ENCODE measurements at regions of chr19 and their contacts with region 1.

Region 1: DNA sequence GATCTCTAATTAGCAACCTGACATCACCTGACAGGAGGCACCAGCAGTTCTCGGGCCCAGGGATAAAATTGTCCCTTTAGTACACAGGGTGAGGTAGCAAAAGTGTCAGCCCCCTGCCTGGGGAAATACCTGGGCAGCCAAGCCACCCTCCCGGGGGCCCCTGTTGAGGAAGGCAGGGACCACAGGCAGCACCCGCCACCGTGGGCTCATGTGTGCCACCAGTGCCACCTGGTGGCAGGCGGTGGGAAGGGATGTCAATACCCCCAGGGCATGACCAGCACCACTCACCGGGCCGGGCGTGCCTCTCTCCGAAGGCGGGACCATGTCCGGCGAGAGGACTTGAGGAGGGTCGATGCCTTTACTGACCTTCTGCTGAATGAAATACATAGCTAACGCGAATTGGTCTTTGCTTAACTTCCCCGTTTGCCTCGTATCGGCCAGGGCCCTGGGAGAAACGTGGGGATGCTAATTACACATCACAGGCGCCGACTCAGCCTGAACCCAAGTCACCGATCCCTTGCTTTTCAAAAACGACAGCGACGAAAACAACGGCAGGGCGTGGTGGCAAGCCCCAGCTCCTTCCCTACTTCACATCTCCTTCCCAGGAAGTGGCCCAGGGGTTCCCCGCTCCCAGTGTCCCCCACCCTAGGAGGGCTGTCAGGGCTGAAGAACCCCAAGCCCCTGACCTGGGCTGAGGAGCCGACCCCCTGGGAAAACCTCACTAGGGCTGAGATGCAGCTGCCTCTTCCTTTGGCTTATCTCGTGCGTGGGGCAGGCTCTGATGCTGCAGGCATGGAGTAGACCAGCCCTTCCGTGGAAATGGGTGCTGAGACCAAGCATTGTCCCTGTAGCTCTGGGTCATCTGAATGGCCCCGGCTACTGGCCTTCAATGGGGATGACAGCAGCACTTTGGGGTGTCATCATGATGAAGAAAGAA is 53.8 kb downstream of the EPS15L1 start:
- DNase-seq: peak; percentile 48 to 69
- ATAC-seq: peak; percentile 87 to 94
- H3K4me3 ChIP-seq: no peak overlapping the region
- H3K27ac ChIP-seq: no peak overlapping the region
- H3K4me1 ChIP-seq: no peaks in the 10 kb centered on the region
- CTCF ChIP-seq: peak; percentile 52
- EP300 ChIP-seq: no peak
- POLR2A ChIP-seq: no peak
- RAD21 ChIP-seq: peak; percentile 52 to 58

Region 2: GRCh38 chr19:15280915-15281683 is 1136.8 kb before region 1 on chr19:
- CTCF ChIA-PET with region 1: no interaction called
- POLR2A ChIA-PET with region 1: no interaction called
- DNase-seq: peak in 1 of 2 experiments; percentile 30
- ATAC-seq: peak; percentile 58 to 69
- H3K4me3 ChIP-seq: no peak overlapping the region
- H3K27ac ChIP-seq: peak overlapping the region; percentile 75 to 84
- H3K4me1 ChIP-seq: peaks cover 88% of the 10 kb centered on the region
- CTCF ChIP-seq: no peak
- EP300 ChIP-seq: no peak
- POLR2A ChIP-seq: no peak
- RAD21 ChIP-seq: no peak

Region 3: DNA sequence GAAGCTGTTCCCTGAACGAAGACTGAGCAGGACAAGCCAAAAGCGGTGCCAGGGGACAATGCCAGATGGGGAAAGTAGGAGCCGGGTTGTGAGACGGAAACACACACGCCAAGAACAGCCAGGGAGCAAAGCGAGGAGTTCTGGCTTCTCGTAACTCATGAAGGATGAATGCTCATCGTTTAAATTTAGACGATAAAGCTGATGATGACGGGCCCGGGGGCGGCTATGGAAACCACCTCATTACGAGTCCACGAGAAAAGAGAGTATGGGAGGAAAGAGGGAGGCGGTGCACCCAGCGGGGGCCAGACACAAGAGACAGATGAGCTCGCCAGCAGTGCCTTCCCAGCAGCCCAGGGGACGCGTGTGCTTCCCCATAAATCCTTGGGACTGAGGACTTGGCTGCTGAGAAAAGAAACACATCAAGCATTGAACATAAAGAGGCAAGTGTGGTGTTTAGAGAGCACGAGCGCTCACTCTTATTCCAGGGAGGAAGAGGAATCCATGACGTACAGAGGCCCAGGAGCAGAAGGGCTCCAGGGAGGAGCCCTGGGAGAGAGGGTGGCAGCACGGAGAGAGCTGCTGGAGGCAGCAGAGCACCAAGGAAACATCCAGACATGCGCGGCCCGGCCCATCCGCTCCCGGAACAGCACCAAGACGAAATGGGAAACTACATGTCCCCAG is 16.9 kb before region 1 on chr19:
- CTCF ChIA-PET with region 1: interaction called, 10 read pairs
- POLR2A ChIA-PET with region 1: no interaction called
- DNase-seq: no peak
- ATAC-seq: no peak
- H3K4me3 ChIP-seq: no peak overlapping the region
- H3K27ac ChIP-seq: no peak overlapping the region
- H3K4me1 ChIP-seq: no peaks in the 10 kb centered on the region
- CTCF ChIP-seq: no peak
- EP300 ChIP-seq: no peak
- POLR2A ChIP-seq: no peak
- RAD21 ChIP-seq: no peak

Region 4: DNA sequence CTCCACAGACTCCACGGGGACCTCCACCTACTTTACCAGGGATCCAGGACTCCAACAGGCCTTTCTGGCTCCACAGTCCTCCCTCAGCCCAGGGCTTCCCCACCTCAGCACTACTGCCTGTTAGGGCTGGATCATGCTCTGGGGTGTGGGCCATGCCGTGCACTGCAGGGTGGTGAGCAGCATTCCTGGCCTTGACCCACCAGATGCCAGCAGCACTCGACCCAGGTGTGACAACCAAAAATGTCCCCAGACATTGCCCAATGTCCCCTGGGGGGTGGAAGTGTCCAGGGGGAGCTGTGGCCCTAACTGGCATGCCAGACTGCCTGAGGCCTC is 11.8 kb after region 1 on chr19:
- CTCF ChIA-PET with region 1: interaction called, 11 read pairs
- POLR2A ChIA-PET with region 1: no interaction called
- DNase-seq: no peak
- ATAC-seq: no peak
- H3K4me3 ChIP-seq: no peak overlapping the region
- H3K27ac ChIP-seq: no peak overlapping the region
- H3K4me1 ChIP-seq: no peaks in the 10 kb centered on the region
- CTCF ChIP-seq: no peak
- EP300 ChIP-seq: no peak
- POLR2A ChIP-seq: no peak
- RAD21 ChIP-seq: no peak

Region 5: DNA sequence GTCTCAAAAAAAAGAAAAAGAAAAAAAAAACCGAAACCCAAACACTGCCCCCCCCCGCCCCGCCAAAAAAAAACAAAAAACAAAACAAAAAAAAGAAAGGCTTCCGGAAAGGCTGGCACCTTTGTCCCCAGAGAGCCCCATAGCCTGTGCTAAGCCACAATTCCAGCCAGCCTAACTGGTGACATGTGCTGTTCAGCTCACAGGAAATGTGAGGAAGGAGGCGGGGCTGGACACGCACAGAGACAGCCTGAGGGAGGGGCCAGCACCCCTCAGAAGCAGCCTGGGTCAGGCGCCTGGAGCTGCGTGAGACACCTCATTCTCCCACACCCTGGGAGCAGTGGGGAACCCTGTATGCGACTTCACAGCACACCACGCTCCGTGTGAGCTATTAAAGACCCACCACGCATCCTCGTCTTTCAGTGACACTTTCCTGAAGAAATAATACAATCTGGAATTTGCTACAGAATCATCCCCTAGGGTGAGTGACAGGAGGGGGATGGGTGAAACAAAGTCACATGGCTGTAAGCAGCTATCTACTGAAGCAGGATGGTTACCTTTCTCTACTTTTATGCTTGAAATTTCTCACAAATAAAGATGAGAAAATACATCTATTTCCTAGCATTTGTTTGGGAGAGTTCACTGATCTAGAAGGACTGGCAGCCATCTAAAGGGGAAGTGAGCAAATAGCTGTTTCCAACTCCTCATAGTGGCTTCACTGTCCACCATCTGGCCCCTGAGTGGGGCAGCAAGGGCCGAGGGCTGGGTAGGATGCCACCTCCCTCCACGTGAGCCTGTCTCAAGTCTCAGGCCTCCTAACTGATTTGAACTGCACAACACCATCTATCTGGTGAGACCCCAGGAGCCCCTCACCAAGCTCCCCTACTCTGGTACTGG is 166.6 kb after region 1 on chr19:
- CTCF ChIA-PET with region 1: no interaction called
- POLR2A ChIA-PET with region 1: no interaction called
- DNase-seq: peak; percentile 40 to 42
- ATAC-seq: peak; percentile 63 to 84; a peak in 5 of 6 replicates
- H3K4me3 ChIP-seq: no peak overlapping the region
- H3K27ac ChIP-seq: peak overlapping the region in 1 of 2 experiments; percentile 64; a peak in 2 of 6 replicates
- H3K4me1 ChIP-seq: peaks cover 33% of the 10 kb centered on the region
- CTCF ChIP-seq: no peak
- EP300 ChIP-seq: no peak
- POLR2A ChIP-seq: no peak
- RAD21 ChIP-seq: no peak